AG04449 (cell line): ENCODE measurements at regions of chr5 and their contacts with region 1.

Region 1: DNA sequence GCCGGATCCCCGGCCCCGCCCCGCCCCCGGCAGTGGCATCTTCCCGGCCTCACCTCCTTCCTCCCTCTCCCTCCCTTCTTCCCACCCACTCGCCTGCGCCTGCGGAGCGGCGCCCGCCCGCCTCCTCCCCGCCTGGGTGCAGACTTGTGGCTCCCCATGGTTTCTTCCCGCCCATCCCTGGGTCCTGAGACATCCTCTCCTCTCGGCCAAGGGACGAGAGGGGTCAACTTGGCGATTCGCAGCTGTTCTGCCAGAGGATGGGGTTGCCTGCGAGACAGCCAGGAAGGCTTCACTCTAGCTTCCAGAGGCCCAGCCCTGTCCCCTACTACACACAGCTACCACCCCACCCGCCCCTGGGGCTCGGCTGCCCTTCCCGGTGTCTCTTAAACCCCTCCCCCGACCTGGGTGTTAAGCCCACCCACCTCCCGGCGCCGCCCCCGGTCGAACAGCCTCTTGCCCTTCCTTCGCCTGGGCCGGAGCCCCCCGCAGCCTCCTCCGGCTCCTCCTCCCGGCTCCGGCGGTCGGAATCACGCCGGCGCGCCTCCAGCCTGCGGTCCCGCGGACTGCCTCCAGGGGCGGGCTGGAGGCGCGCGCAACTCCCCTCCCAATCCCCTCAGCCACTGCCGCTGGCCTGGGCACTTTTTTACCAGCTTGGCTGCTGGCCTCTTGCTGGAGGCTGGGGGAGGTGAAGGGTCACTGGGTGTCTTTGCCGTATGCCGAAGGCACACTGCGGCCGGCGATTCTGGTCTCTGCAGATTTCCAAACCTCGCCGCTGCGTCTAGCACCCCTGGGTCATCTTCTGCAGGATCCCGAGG is 1.9 kb downstream of the JADE2 start:
- DNase-seq: no peak
- H3K4me3 ChIP-seq: peak overlapping the region; percentile 75
- CTCF ChIP-seq: peak; percentile 88

Region 2: DNA sequence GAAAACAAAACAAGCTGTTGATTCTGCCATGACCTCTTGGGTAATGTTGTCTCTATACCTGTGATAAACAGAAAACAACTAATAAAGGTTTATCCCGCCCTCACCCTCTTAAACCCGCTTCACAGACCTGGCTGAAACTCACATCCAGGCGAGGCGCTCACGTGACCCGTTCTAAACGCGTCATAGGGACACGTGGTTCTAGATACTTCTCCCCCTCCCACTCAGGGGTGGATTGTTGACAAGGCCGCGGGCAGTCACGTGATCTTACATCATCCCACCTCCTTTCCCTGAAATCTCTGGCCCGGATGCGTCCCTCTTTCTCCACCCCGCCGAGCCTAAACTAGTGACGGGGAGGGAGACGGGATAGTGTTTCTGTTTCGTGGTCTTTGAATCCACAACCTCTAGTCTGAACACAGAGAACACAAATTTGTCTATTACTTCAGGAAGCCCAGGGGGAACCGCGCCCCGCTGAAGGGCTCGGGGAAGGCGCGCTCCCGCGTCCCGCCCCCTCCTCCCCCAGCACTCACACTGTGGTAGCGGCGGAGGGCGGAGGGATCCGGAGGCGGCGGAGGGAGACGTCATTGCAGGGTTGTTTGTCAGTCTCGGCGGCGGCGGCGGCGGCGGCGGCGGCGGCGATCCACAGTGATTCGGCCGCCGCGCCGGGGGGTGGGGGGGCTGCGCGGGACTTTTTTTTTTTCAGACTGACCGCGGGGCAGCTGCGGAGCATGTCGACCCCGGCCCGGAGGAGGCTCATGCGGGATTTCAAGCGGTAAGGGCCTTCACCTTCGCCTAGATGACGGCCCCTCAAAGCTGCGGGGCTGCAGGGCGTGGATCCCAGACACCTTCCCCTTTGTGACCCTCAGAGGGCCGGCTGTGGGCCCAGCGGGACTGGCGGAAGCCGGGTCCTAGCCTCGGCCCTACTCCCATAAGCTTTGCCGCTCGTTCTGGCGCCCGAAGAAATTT is 156.2 kb before region 1 on chr5 and contains the start of gene UBE2B:
- CTCF ChIA-PET with region 1: interaction called, 10 read pairs
- POLR2A ChIA-PET with region 1: no interaction called
- DNase-seq: peak; percentile 99
- H3K4me3 ChIP-seq: peak within 1 kb of the TSS; percentile 99
- CTCF ChIP-seq: no peak

Region 3: GRCh38 chr5:134411546-134412266 is 115.6 kb before region 1 on chr5 and contains the start of gene CDKN2AIPNL:
- CTCF ChIA-PET with region 1: interaction called, 65 read pairs
- POLR2A ChIA-PET with region 1: interaction called, 4 read pairs
- DNase-seq: peak; percentile 16
- H3K4me3 ChIP-seq: peak within 1 kb of the TSS; percentile 92
- CTCF ChIP-seq: peak; percentile 93

Region 4: GRCh38 chr5:134477462-134478250 is 49.7 kb before region 1 on chr5:
- CTCF ChIA-PET with region 1: no interaction called
- POLR2A ChIA-PET with region 1: no interaction called
- DNase-seq: no peak
- H3K4me3 ChIP-seq: no peak overlapping the region
- CTCF ChIP-seq: no peak

Region 5: DNA sequence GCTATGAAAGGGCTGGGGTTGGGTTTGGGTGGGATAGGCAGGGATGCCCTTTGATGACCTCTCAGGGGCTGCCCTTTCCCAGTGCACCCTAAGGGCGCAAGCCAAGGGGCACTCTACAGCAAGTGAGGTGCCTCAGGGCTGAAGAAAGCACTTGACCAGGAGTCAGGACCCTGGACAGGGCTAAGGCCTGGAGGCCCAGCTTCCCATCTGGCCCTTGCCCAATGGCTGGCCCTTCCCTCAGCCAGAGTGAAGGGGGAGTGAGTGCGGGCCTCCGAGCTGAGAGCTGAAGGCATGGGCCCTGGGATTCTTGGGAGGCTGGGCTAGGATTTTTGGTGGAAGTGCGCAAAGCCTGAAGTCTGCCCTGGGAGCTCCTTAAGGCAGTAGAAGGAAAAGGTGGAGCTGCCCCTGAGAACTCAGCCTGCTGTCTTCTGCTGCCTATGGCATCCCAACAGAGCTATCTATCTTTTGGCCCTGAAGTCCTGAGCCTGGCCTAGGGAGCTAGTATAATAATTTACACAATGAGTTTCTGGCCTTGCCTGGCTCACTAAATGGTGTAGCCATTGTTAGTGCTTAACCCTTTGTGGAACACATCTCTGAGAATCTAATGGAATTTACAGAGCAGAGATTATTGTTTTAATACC is 14.5 kb after region 1 on chr5:
- CTCF ChIA-PET with region 1: interaction called, 47 read pairs
- POLR2A ChIA-PET with region 1: no interaction called
- DNase-seq: no peak
- H3K4me3 ChIP-seq: no peak overlapping the region
- CTCF ChIP-seq: no peak

Region 6: DNA sequence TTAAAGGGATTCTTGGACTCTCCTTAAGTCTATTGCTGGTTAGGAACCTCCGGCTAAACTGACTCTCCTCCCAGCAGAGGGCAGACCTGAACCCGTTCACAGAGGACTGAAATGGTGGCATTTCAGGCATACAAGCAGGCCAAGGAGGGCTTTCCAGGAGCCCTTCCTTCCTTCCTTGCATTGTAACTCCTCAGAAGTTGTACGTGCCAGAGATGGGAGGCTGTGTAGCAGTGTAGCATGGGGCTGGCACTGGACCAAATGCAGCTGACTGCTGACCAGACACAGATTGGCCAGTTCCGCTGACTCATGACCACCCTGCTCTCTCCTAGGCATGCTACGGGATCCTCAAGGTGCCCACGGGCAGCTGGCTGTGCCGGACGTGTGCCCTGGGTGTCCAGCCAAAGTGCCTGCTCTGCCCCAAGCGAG is 34.5 kb after region 1 on chr5:
- CTCF ChIA-PET with region 1: interaction called, 14 read pairs
- POLR2A ChIA-PET with region 1: no interaction called
- DNase-seq: no peak
- H3K4me3 ChIP-seq: no peak overlapping the region
- CTCF ChIP-seq: peak; percentile 55

Region 7: DNA sequence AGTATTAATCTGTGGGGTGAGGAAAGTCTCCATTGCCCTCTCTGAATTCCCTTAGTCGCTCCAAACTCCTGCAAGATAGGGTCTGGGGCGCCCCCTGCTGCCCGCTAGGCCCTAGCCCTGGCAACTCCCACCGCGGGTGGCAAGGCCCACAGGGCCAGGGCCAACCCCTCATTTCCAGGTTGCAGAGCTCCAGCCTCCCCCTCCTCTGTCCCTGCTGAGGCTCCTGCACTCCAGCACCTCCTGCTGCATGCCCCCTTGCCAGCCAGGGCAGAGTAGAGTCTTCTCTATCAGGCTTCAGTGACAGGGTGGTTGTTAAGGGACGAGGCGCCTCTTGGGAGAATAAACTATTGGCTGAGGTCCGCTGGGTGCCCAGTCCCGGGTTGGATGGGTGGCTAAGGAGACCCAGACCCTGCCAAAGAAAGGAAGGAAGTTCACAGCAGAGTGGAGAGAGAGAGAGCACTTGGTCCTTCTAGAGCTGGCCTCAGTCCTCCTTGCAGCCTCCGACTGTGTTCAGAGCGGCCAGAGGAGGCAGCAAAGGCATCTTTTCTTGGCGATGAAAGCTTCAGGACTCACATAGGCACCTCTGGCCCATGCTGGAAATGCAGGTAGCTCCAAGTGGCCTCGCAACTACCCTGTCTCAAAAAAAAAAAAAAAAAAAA is 59.6 kb after region 1 on chr5:
- CTCF ChIA-PET with region 1: interaction called, 17 read pairs
- POLR2A ChIA-PET with region 1: interaction called, 3 read pairs
- DNase-seq: no peak
- H3K4me3 ChIP-seq: no peak overlapping the region
- CTCF ChIP-seq: peak; percentile 90